A673 (cell line): ENCODE measurements at regions of chr1 and their contacts with region 1.

Region 1: GRCh38 chr1:38651669-38652068 is 207.9 kb downstream of the RRAGC start:
- DNase-seq: no peak
- H3K4me3 ChIP-seq: no peak overlapping the region
- H3K27ac ChIP-seq: no peak overlapping the region
- H3K4me1 ChIP-seq: no peaks in the 10 kb centered on the region
- H3K27me3 ChIP-seq: no peaks in the 10 kb centered on the region
- CTCF ChIP-seq: no peak

Region 2: GRCh38 chr1:37931361-37932158 is 720.1 kb before region 1 on chr1:
- CTCF ChIA-PET with region 1: no interaction called
- POLR2A ChIA-PET with region 1: no interaction called
- intact Hi-C with region 1: no loop called
- DNase-seq: peak; percentile 99
- H3K4me3 ChIP-seq: peak overlapping the region; percentile 88
- H3K27ac ChIP-seq: peak overlapping the region; percentile 71
- H3K4me1 ChIP-seq: peaks cover 7% of the 10 kb centered on the region
- H3K27me3 ChIP-seq: no peaks in the 10 kb centered on the region
- CTCF ChIP-seq: no peak

Region 3: GRCh38 chr1:38628241-38628640 is 23.4 kb before region 1 on chr1:
- CTCF ChIA-PET with region 1: interaction called, 12 read pairs
- POLR2A ChIA-PET with region 1: no interaction called
- intact Hi-C with region 1: no loop called
- DNase-seq: no peak
- H3K4me3 ChIP-seq: no peak overlapping the region
- H3K27ac ChIP-seq: no peak overlapping the region
- H3K4me1 ChIP-seq: no peaks in the 10 kb centered on the region
- H3K27me3 ChIP-seq: no peaks in the 10 kb centered on the region
- CTCF ChIP-seq: no peak

Region 4: DNA sequence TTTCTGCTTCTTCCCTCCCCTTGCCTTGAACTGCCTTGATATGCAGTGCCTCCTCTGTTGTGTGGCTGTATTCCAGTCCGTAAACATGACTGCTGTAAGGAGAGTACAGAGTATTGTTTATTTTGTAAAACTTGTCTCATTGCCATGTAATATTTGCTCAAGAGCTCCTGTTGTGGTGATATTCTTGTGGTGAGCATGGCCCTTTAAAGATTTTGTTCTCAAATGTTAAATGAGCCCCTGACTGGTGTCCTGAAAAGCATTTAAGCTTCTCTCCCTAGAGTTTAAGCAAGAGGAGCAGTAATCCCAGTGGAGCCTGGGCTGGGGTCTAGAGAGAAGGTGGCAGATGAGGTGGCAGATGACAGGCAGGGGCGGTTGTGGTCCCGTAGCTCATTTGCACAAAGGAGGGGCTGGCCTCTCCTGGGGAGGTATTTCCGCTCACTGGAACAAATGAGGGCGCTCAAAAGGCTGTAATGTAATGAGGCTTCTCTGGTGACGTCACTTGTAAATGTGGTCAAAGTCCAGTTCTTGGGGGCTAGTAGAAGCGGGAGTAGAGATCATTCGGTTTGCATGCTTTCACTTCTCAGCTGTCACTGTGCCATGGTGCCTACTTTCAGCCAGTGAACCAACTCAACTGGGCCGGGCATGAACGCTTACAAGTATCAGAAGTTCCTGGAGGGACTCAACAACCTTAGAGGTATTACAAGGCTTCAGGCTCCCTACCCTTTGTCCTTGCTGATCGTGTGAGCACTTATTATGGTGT is 506.8 kb after region 1 on chr1:
- CTCF ChIA-PET with region 1: no interaction called
- POLR2A ChIA-PET with region 1: interaction called, 10 read pairs
- intact Hi-C with region 1: no loop called
- DNase-seq: no peak
- H3K4me3 ChIP-seq: no peak overlapping the region
- H3K27ac ChIP-seq: no peak overlapping the region
- H3K4me1 ChIP-seq: peaks cover 27% of the 10 kb centered on the region
- H3K27me3 ChIP-seq: no peaks in the 10 kb centered on the region
- CTCF ChIP-seq: no peak